ENCODE measurements at regions of chr14 and their contacts with region 1.

Region 1: GRCh38 chr14:24817212-24818057 is 183.4 kb upstream of the GZMB start:
- DNase-seq: no peak
- ATAC-seq: peak in 1 of 4 donors; percentile 59
- H3K4me3 ChIP-seq: no peak overlapping the region
- H3K27ac ChIP-seq: no peak overlapping the region
- H3K4me1 ChIP-seq: peaks cover 5% of the 10 kb centered on the region
- H3K27me3 ChIP-seq: no peaks in the 10 kb centered on the region
- CTCF ChIP-seq: no peak

Region 2: GRCh38 chr14:25042362-25043299 is 225.2 kb after region 1 on chr14:
- intact Hi-C with region 1: loop called in 1 of 2 experiments (anchors 5 kb)
- DNase-seq: no peak
- ATAC-seq: no peak
- H3K4me3 ChIP-seq: no peak overlapping the region
- H3K27ac ChIP-seq: no peak overlapping the region
- H3K4me1 ChIP-seq: no peaks in the 10 kb centered on the region
- H3K27me3 ChIP-seq: peaks cover 0 to 2% (median under 1%) of the 10 kb centered on the region in 3 donors
- CTCF ChIP-seq: peak; percentile 24

Region 3: GRCh38 chr14:25053585-25053984 is 236.2 kb after region 1 on chr14:
- intact Hi-C with region 1: no loop called
- DNase-seq: no peak
- ATAC-seq: no peak
- H3K4me3 ChIP-seq: no peak overlapping the region
- H3K27ac ChIP-seq: no peak overlapping the region
- H3K4me1 ChIP-seq: no peaks in the 10 kb centered on the region
- H3K27me3 ChIP-seq: peaks cover 1 to 41% (median 4%) of the 10 kb centered on the region in 3 donors
- CTCF ChIP-seq: no peak